ENCODE measurements at regions of chr6 and their contacts with region 1.

Region 1: DNA sequence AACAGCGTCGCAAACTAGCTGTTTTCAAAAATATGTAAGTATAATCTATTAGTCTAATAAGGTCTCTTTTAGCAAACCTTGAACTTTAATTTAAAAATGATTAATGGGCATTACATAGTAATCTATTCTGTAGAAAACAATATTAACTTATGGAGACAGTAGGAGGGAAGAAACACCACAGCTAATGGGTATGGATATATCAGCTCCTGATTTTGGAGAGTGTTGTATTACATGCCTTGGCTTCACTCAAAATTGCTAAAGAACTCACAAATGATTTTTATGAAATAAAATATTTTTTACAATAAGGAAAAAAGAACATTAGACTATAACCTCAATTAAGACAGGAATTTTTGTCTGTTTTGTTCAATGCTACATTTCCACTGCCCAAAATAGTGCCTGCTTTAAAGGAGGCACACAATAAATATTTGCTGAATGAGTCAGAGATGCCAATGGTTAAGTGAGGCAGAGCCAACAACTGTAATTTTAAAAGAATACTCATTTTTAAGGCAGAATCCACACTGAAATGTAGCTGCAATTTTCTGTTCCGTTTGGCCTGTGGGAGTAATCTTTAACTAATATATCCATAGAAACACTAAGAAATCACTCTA is 15.7 kb downstream of the ATG5 start:
- H3K4me3 ChIP-seq: no peak overlapping the region
- H3K27ac ChIP-seq: no peak overlapping the region
- H3K4me1 ChIP-seq: peaks cover 22% of the 10 kb centered on the region
- CTCF ChIP-seq: no peak

Region 2: DNA sequence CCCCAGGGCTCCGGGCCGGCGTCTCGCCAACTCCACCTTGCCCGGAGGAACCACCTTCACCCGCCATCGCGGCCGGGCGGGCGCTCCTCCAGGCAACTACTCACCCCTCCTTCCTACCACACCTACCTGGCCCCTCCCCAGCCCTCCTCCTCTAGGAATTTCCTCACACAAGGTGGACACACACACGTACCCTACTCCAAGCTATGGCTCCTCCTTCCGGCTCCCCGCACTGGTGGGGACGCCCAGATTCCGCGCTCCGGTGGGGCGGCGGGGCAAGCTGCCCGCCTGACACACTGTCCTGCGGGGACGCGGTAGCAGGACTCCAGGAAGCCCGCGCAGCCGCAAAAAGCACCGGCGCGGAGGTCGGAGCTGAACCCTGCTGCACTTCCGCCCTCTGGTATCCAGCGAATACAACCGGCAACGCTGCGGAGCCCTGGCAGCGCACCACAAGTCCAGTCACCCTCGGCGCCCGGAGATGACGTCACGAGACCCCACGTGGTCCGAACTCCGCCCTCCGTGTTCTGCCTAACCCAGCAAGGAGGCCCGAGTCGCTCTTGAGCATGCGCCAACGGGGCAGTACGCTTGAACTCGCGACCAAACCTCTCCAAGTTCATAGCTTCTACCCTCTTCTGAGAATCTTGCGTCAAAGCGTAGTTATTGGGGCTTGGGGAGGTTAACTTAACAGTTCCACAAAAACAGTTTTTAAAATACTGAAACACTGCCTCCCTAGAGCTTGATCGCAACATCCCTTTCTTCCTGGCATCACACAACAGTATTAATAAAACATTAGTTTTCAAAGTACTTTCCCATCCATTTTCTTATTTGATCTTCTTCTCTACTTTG is 15.7 kb after region 1 on chr6 and contains the start of gene ATG5:
- CTCF ChIA-PET with region 1: interaction called, 4 read pairs
- POLR2A ChIA-PET with region 1: interaction called, 14 read pairs
- H3K4me3 ChIP-seq: peak within 1 kb of the TSS; percentile 86
- H3K27ac ChIP-seq: peak within 1 kb of the TSS; percentile 91
- H3K4me1 ChIP-seq: peaks cover 2% of the 10 kb centered on the region; the same call in 1 of the 2 replicates
- CTCF ChIP-seq: peak; percentile 65; the same call in 1 of the 2 replicates

Region 3: GRCh38 chr6:106715922-106716321 is 406.1 kb after region 1 on chr6:
- CTCF ChIA-PET with region 1: no interaction called
- POLR2A ChIA-PET with region 1: no interaction called
- H3K4me3 ChIP-seq: no peak overlapping the region
- H3K27ac ChIP-seq: no peak overlapping the region
- H3K4me1 ChIP-seq: no peaks in the 10 kb centered on the region
- CTCF ChIP-seq: no peak

Measured in HEK293 (cell line).